GM13977 (cell line): ENCODE measurements at regions of chr11 and their contacts with region 1.

Region 1: GRCh38 chr11:61187505-61188130 is 15.7 kb upstream of the PGA3 start:
- DNase-seq: peak; percentile 83
- CTCF ChIP-seq: peak; percentile 92

Region 2: DNA sequence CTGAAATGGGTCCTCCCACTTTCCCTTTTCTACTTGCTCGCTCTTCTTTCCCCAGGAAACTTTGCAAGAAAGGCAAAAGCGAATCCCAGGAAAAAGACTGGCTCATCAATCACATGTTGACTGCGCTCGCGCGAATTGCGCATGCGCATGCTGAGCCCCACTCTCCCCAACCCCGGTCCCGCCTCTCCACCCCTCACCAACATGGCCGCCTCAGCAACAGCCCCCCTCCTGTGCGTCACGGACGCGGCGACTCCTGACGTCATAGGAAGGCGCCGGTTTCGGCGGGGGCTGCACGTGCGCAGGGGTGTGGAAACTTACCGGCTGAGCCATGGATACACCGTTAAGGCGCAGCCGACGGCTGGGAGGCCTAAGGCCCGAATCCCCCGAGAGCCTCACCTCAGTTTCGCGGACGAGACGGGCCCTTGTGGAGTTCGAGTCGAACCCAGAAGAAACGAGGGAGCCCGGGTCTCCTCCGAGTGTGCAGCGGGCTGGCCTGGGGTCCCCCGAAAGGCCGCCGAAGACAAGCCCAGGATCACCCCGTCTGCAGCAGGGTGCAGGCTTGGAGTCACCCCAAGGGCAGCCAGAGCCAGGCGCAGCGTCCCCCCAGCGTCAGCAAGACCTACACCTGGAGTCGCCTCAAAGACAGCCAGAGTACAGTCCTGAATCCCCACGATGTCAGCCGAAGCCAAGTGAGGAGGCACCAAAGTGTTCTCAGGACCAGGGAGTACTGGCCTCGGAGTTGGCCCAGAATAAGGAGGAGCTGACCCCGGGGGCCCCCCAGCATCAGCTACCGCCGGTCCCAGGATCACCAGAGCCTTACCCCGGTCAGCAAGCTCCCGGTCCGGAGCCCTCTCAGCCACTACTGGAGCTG is 345.6 kb before region 1 on chr11 and contains the start of gene CCDC86:
- in situ Hi-C with region 1: loop called (anchors 25 kb)
- DNase-seq: peak; percentile 98
- CTCF ChIP-seq: no peak

Region 3: DNA sequence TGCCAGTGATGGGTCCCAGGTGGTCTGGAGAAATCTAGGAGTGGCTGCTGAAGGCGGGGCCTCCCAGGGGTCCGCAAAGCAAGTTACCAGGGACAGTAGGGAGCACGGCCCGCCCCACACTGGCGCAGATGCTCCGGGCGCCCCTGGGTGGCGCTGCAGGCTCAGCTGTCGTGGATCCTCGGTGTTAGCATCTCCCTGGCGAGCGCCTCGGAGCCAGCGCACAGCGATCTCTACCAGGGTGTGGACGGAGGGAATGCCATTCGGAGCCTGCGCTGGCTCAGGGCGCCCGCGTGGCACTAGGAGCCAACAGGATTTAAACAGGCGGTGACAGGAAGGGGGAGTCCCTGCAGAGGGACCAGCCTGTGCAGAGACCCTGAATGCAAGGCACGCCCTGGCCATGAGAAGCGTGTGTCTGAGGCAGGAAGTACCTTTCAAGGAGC is 683.6 kb after region 1 on chr11:
- in situ Hi-C with region 1: no loop called
- DNase-seq: peak; percentile 88
- CTCF ChIP-seq: peak; percentile 91

Region 4: GRCh38 chr11:62069986-62070919 is 882.6 kb after region 1 on chr11:
- in situ Hi-C with region 1: no loop called
- DNase-seq: no peak
- CTCF ChIP-seq: no peak